SK-N-SH (cell line): ENCODE measurements at regions of chr10 and their contacts with region 1.

Region 1: GRCh38 chr10:98408799-98409198 is 6.2 kb downstream of the PYROXD2 start:
- DNase-seq: no peak
- H3K4me3 ChIP-seq: no peak overlapping the region
- H3K27ac ChIP-seq: no peak overlapping the region
- H3K4me1 ChIP-seq: peaks cover 3 to 10% of the 10 kb centered on the region in 2 experiments; a peak in 3 of 4 replicates
- H3K27me3 ChIP-seq: no peaks in the 10 kb centered on the region
- CTCF ChIP-seq: no peak
- EP300 ChIP-seq: no peak
- RAD21 ChIP-seq: no peak

Region 2: DNA sequence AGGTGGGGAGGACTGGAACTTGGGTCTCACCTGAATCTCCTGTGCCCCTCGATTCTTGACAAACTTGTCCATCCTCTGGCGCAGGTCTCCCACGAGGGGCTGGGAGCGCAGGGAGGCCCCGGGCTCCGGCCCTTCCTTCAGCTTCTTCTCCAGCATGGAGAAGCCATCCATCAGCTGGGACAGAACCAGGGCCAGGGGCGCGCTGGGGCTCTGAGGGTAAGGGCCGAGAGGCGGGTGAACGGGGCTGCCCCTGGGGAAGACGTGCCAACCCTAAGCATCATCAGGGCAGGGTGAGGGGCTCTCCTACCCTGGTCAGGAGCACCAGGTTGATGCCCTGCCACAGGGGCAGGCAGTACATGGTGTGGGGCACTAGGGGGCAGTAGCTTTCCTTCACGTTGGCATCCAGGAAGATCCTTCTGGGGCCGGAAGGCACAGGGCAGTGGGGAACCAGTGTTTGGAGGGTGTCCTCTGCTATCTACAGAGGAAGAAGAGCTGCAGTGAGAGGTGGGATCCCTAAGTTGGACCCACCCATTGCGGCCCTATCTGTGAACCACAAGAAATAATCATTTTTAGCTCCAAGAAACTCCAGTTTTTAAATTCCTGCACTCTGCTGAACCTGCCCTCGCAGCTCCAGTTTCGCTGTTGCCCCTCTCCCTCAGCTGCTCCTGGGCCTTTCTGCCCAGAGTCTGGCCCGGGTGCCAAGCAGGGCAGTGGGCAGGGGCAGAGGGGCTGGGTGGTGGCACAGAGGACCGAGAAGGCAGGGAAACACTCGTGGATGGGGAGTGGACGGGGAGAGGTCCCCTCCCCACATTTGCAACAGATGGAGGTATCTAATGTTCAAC is 16.9 kb after region 1 on chr10:
- CTCF ChIA-PET with region 1: interaction called, 10 read pairs
- POLR2A ChIA-PET with region 1: no interaction called
- DNase-seq: peak; percentile 78
- H3K4me3 ChIP-seq: no peak overlapping the region
- H3K27ac ChIP-seq: no peak overlapping the region
- H3K4me1 ChIP-seq: peaks cover 0 to 3% of the 10 kb centered on the region in 2 experiments; a peak in 1 of 4 replicates
- H3K27me3 ChIP-seq: no peaks in the 10 kb centered on the region
- CTCF ChIP-seq: peak; percentile 65
- EP300 ChIP-seq: no peak
- RAD21 ChIP-seq: peak; percentile 53